ENCODE measurements at regions of chr2 and their contacts with region 1.

Region 1: GRCh38 chr2:16756831-16757644 is 91.4 kb upstream of the CYRIA start:
- DNase-seq: peak; percentile 86
- ATAC-seq: peak; percentile 95
- H3K4me3 ChIP-seq: no peak overlapping the region
- H3K4me3 Mint-ChIP-seq: peak overlapping the region; percentile 17
- H3K27ac ChIP-seq: no peak overlapping the region
- H3K27ac Mint-ChIP-seq: peak overlapping the region; percentile 28
- H3K4me1 ChIP-seq: peaks cover 3 to 4% of the 10 kb centered on the region in 2 donors
- H3K4me1 Mint-ChIP-seq: peaks cover 5% of the 10 kb centered on the region
- H3K27me3 ChIP-seq: no peaks in the 10 kb centered on the region
- H3K27me3 Mint-ChIP-seq: peaks cover 5% of the 10 kb centered on the region
- CTCF ChIP-seq: peak; percentile 86

Region 2: DNA sequence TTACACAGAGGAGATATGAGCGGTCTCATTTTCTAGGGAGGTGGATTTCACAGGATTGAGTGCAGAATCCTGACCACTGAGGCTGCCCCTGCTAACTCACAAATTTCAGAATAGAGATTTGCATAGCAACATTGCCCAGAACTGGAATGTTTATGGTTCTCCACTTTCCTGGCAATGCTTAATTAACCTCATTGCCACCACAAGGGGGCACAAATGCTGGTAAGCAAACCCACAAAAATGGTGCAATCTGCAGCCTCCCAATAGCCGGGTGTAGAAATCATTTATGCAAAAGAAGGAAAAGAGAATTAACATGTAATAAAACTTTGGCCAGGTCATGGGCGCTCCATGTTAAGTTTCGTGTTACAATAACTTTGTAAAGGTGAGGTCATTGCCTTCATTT is 203.8 kb before region 1 on chr2:
- CTCF ChIA-PET with region 1: interaction called, 83 read pairs
- POLR2A ChIA-PET with region 1: no interaction called
- intact Hi-C with region 1: loop called (anchors 1 kb)
- DNase-seq: peak; percentile 47
- ATAC-seq: no peak
- H3K4me3 ChIP-seq: no peak overlapping the region
- H3K4me3 Mint-ChIP-seq: no peak overlapping the region
- H3K27ac ChIP-seq: no peak overlapping the region
- H3K27ac Mint-ChIP-seq: no peak overlapping the region
- H3K4me1 ChIP-seq: no peaks in the 10 kb centered on the region
- H3K4me1 Mint-ChIP-seq: no peaks in the 10 kb centered on the region
- H3K27me3 ChIP-seq: no peaks in the 10 kb centered on the region
- H3K27me3 Mint-ChIP-seq: no peaks in the 10 kb centered on the region
- CTCF ChIP-seq: peak; percentile 70

Region 3: GRCh38 chr2:16617282-16618261 is 139.5 kb before region 1 on chr2:
- CTCF ChIA-PET with region 1: interaction called, 242 read pairs
- POLR2A ChIA-PET with region 1: interaction called, 8 read pairs
- intact Hi-C with region 1: loop called (anchors 1 kb)
- DNase-seq: no peak
- ATAC-seq: no peak
- H3K4me3 ChIP-seq: no peak overlapping the region
- H3K4me3 Mint-ChIP-seq: no peak overlapping the region
- H3K27ac ChIP-seq: peak overlapping the region in 1 of 2 donors; percentile 18
- H3K27ac Mint-ChIP-seq: peak overlapping the region; percentile 46
- H3K4me1 ChIP-seq: peaks cover 25 to 43% of the 10 kb centered on the region in 2 donors
- H3K4me1 Mint-ChIP-seq: peaks cover 61% of the 10 kb centered on the region
- H3K27me3 ChIP-seq: no peaks in the 10 kb centered on the region
- H3K27me3 Mint-ChIP-seq: no peaks in the 10 kb centered on the region
- CTCF ChIP-seq: no peak

Region 4: GRCh38 chr2:16656784-16657391 is 100.2 kb before region 1 on chr2:
- CTCF ChIA-PET with region 1: interaction called, 16 read pairs
- POLR2A ChIA-PET with region 1: interaction called, 3 read pairs
- intact Hi-C with region 1: no loop called
- DNase-seq: peak; percentile 82
- ATAC-seq: peak; percentile 65
- H3K4me3 ChIP-seq: peak overlapping the region in 3 of 5 experiments; percentile 16 to 43 (median 33)
- H3K4me3 Mint-ChIP-seq: peak overlapping the region; percentile 84
- H3K27ac ChIP-seq: peak overlapping the region; percentile 66 to 82
- H3K27ac Mint-ChIP-seq: peak overlapping the region; percentile 86
- H3K4me1 ChIP-seq: peaks cover 96 to 99% of the 10 kb centered on the region in 2 donors
- H3K4me1 Mint-ChIP-seq: peaks cover 98% of the 10 kb centered on the region
- H3K27me3 ChIP-seq: no peaks in the 10 kb centered on the region
- H3K27me3 Mint-ChIP-seq: no peaks in the 10 kb centered on the region
- CTCF ChIP-seq: no peak

Region 5: DNA sequence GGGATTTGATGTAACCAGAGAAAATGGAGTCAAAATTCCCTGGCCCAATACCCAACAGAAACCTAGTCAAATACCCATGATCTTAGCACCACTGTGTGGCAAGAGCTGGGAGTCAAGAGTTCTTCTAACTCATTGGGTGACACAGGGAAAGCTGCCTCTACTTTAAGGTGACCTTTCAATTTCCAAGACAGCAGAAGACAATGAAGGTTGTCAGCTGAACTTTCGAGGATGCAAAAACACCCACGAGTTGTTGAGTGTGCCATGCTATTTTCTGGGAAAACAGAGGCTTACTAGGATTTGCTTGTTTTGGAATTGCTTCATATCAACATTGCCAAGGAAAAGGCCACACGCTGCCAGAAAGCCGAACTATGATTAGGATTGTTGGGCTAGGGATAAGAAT is 29.8 kb before region 1 on chr2:
- CTCF ChIA-PET with region 1: interaction called, 10 read pairs
- POLR2A ChIA-PET with region 1: no interaction called
- intact Hi-C with region 1: no loop called
- DNase-seq: no peak
- ATAC-seq: no peak
- H3K4me3 ChIP-seq: no peak overlapping the region
- H3K4me3 Mint-ChIP-seq: no peak overlapping the region
- H3K27ac ChIP-seq: no peak overlapping the region
- H3K27ac Mint-ChIP-seq: no peak overlapping the region
- H3K4me1 ChIP-seq: peaks cover 12 to 20% of the 10 kb centered on the region in 2 donors
- H3K4me1 Mint-ChIP-seq: peaks cover 42% of the 10 kb centered on the region
- H3K27me3 ChIP-seq: no peaks in the 10 kb centered on the region
- H3K27me3 Mint-ChIP-seq: no peaks in the 10 kb centered on the region
- CTCF ChIP-seq: no peak

Measured in B cell (primary cell).